Transverse colon (tissue), 4 donors: ENCODE measurements at regions of chr7 and their contacts with region 1.

Region 1: GRCh38 chr7:25851332-25852210 is 300.4 kb upstream of the NFE2L3 start:
- DNase-seq: peak; percentile 91
- H3K4me3 ChIP-seq: peak overlapping the region in 3 of 4 donors; percentile 5 to 39 (median 33)
- H3K27ac ChIP-seq: peak overlapping the region; percentile 85 to 94 (median 86)
- H3K4me1 ChIP-seq: peaks cover 41 to 77% (median 41%) of the 10 kb centered on the region in 4 donors
- H3K27me3 ChIP-seq: peaks cover 49% of the 10 kb centered on the region
- CTCF ChIP-seq: peak; percentile 81 to 96 (median 88)
- EP300 ChIP-seq: no peak
- POLR2A ChIP-seq: no peak

Region 2: DNA sequence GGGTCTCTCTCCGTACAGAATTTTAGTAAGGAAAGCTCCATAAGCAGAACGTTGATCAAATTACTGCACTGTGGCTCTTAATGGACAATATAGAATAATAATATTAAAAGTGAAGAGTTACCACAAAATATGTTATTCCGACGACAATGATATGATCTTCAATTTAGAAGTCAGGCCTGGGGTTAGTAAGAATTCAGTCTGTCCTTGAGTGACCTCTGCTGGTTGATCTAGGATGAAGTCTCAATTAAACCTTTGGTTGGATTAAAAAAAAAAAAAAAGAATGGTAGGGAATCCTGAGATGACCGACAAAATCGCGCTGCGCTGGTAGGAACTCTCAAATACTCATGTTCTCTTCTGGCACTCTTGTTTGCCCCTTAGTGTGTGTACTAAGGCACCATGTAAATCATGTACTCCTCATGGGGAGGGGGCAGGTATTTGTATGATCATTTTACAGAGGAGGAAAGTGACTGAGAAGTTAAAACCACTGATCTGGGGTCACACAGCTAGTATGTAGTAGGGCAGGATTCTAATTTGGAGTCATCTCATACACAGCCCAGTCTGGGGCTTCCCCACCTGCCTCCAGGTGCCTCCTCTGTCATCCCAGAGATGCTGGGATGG is 462.0 kb before region 1 on chr7:
- in situ Hi-C with region 1: loop called in 2 of 4 experiments (anchors 5 to 10 kb)
- intact Hi-C with region 1: loop called (anchors 2 kb)
- DNase-seq: peak; percentile 13
- H3K4me3 ChIP-seq: no peak overlapping the region
- H3K27ac ChIP-seq: peak overlapping the region in 2 of 4 donors; percentile 3 to 31
- H3K4me1 ChIP-seq: peaks cover 0 to 41% (median 24%) of the 10 kb centered on the region in 4 donors
- H3K27me3 ChIP-seq: no peaks in the 10 kb centered on the region
- CTCF ChIP-seq: peak; percentile 50 to 74 (median 54)
- EP300 ChIP-seq: no peak
- POLR2A ChIP-seq: no peak

Region 3: GRCh38 chr7:25537662-25538375 is 313.8 kb before region 1 on chr7:
- in situ Hi-C with region 1: no loop called
- intact Hi-C with region 1: no loop called
- DNase-seq: no peak
- H3K4me3 ChIP-seq: no peak overlapping the region
- H3K27ac ChIP-seq: peak overlapping the region in 1 of 4 donors; percentile 11
- H3K4me1 ChIP-seq: no peaks in the 10 kb centered on the region
- H3K27me3 ChIP-seq: no peaks in the 10 kb centered on the region
- CTCF ChIP-seq: no peak
- EP300 ChIP-seq: no peak
- POLR2A ChIP-seq: no peak

Region 4: DNA sequence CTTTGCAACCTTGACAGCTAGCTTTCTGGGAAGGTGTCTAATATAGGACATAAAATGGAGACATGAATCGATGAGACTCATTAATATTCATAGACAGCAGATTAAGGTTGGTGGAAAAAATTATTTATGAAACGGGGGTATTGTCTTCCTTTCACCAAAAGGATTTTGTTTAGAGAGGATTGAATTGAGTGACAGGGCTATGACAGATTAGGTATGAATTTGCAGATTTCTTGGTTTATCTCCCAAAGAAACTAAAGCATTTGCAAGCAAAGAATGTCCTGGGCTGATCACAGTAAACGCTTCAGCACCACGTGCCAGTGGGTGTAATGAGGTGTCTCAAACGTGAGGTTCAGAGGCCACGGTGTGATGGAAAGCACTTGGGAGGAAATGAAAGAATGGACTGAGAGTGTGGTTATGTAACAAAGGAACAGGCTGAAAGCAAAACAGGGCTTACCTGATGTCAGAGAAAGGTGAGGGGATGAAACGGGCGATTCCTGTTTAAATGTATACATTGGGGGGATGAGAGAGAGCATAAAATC is 294.1 kb before region 1 on chr7:
- in situ Hi-C with region 1: loop called in 3 of 4 experiments (anchors 5 to 10 kb)
- intact Hi-C with region 1: no loop called
- DNase-seq: no peak
- H3K4me3 ChIP-seq: no peak overlapping the region
- H3K27ac ChIP-seq: no peak overlapping the region
- H3K4me1 ChIP-seq: peaks cover 0 to 2% (median 0%) of the 10 kb centered on the region in 4 donors
- H3K27me3 ChIP-seq: no peaks in the 10 kb centered on the region
- CTCF ChIP-seq: no peak
- EP300 ChIP-seq: no peak
- POLR2A ChIP-seq: no peak

Region 5: DNA sequence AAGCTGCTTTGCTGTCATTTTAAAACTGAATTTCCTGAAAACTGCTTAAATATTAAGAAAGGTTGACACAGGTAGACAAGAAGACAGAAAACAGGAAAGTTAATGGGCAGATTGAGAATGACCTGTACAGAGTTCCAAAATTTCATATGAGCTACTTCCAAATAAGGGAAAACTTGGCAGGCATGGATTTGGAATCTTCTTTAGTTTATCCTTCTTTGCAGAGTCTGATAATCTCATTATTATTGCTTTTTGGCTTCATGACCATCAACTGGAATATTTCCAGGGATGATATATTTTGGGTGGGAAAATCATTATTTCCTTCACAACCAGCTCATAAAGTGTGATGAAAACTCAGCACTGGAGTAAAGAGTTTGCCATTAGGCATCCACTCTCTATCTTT is 276.7 kb before region 1 on chr7:
- in situ Hi-C with region 1: no loop called
- intact Hi-C with region 1: loop called (anchors 5 kb)
- DNase-seq: no peak
- H3K4me3 ChIP-seq: no peak overlapping the region
- H3K27ac ChIP-seq: no peak overlapping the region
- H3K4me1 ChIP-seq: peaks cover 0 to 26% (median 10%) of the 10 kb centered on the region in 4 donors
- H3K27me3 ChIP-seq: no peaks in the 10 kb centered on the region
- CTCF ChIP-seq: no peak
- EP300 ChIP-seq: no peak
- POLR2A ChIP-seq: no peak

Region 6: GRCh38 chr7:25669961-25670841 is 181.4 kb before region 1 on chr7:
- in situ Hi-C with region 1: loop called in 1 of 4 experiments (anchors 25 kb)
- intact Hi-C with region 1: no loop called
- DNase-seq: peak; percentile 24
- H3K4me3 ChIP-seq: no peak overlapping the region
- H3K27ac ChIP-seq: peak overlapping the region; percentile 19 to 67 (median 49)
- H3K4me1 ChIP-seq: peaks cover 5 to 29% (median 13%) of the 10 kb centered on the region in 4 donors
- H3K27me3 ChIP-seq: no peaks in the 10 kb centered on the region
- CTCF ChIP-seq: no peak
- EP300 ChIP-seq: no peak
- POLR2A ChIP-seq: no peak

Region 7: GRCh38 chr7:27160546-27161213 is 1309.1 kb after region 1 on chr7:
- in situ Hi-C with region 1: loop called in 1 of 4 experiments (anchors 25 kb)
- intact Hi-C with region 1: loop called (anchors 10 kb)
- DNase-seq: peak; percentile 94
- H3K4me3 ChIP-seq: peak overlapping the region; percentile 30 to 62 (median 48)
- H3K27ac ChIP-seq: peak overlapping the region; percentile 95 to 99 (median 98)
- H3K4me1 ChIP-seq: peaks cover 4 to 41% (median 19%) of the 10 kb centered on the region in 4 donors
- H3K27me3 ChIP-seq: peaks cover 18% of the 10 kb centered on the region
- CTCF ChIP-seq: peak; percentile 100
- EP300 ChIP-seq: no peak
- POLR2A ChIP-seq: peak; percentile 27